ENCODE measurements at regions of chr6 and their contacts with region 1.

Region 1: GRCh38 chr6:100464903-100465700 is at the start of gene SIM1:
- DNase-seq: no peak
- total RNA-seq, gene SIM1: 0.16 TPM

Region 2: DNA sequence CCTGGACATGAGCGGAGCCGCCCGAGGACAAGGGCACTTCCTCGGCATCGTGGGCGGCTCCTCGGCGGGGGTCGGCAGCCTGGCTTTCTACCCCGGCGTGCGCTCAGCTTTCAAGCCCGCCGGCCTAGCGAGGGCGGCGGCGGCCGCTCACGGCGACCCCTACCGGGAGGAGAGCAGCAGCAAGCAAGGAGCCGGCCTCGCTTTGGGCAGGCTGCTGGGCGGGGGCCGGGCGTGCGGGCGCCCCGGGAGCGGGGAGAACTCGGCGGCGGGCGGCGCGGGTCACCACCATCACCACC is 851.7 kb before region 1 on chr6:
- intact Hi-C with region 1: loop called (anchors 10 kb)
- DNase-seq: no peak

Region 3: DNA sequence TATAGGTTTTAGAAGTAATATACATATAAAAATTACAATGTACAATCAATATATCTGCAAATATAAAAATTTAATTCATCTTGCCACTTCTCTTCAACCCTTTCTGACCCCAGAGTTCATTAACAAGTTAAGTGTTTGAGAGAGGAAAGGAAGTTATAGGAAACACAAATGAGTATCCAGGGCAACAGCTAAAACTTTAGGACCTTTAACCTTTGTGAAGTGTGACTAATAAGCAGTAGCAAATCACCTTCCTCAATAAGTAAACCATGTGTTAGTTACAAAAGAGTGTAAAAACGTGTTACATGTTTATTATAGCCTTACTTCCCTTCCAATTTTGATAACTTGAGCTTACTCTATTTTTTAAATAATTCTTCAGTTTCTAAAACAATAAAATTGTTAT is 73.0 kb after region 1 on chr6:
- intact Hi-C with region 1: no loop called
- DNase-seq: no peak

Measured in cardiac septum (tissue), 1 donor.